IMR-90 (cell line): ENCODE measurements at regions of chr18 and their contacts with region 1.

Region 1: GRCh38 chr18:22563098-22563707 is 145.5 kb upstream of the CTAGE1 start:
- DNase-seq: peak; percentile 95
- ATAC-seq: peak; percentile 71
- H3K4me3 ChIP-seq: peak overlapping the region; percentile 5; the same call in 1 of the 2 replicates
- H3K27ac ChIP-seq: no peak overlapping the region
- H3K4me1 ChIP-seq: peaks cover 6% of the 10 kb centered on the region
- H3K27me3 ChIP-seq: no peaks in the 10 kb centered on the region; the same call in 1 of the 2 replicates
- CTCF ChIP-seq: peak; percentile 91
- POLR2A ChIP-seq: 0 out of 2 replicates have a peak, but pooled peaks have one; percentile 45
- RAD21 ChIP-seq: peak; percentile 100

Region 2: DNA sequence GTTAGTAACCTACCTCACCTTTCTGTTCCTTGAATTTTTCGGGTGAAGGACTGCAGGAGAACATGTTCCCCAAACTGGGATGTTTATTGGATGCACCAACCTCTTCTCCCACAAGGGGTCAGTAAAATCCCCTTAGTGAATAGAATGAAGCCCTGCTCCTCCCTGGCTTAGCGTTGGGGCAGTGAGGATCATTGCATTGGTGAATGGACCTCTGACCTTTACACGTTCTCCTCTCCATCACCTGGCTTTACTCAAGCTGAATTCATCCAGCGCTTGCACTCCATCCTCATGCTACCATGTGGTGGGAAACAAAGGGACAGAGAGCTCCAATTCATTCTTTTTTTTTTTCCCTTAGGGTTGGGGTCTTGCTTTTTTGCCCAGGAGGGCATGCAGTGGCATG is 665.4 kb before region 1 on chr18:
- CTCF ChIA-PET with region 1: interaction called, 3 read pairs
- POLR2A ChIA-PET with region 1: interaction called, 3 read pairs
- dilution Hi-C with region 1: no loop called
- in situ Hi-C with region 1: loop called (anchors 10 kb)
- intact Hi-C with region 1: loop called (anchors 5 kb)
- DNase-seq: peak; percentile 42
- ATAC-seq: peak; percentile 87
- H3K4me3 ChIP-seq: no peak overlapping the region
- H3K27ac ChIP-seq: no peak overlapping the region
- H3K4me1 ChIP-seq: no peaks in the 10 kb centered on the region; the same call in 1 of the 2 replicates
- H3K27me3 ChIP-seq: no peaks in the 10 kb centered on the region; the same call in 1 of the 2 replicates
- CTCF ChIP-seq: peak; percentile 66
- POLR2A ChIP-seq: no peak
- RAD21 ChIP-seq: peak; percentile 71

Region 3: DNA sequence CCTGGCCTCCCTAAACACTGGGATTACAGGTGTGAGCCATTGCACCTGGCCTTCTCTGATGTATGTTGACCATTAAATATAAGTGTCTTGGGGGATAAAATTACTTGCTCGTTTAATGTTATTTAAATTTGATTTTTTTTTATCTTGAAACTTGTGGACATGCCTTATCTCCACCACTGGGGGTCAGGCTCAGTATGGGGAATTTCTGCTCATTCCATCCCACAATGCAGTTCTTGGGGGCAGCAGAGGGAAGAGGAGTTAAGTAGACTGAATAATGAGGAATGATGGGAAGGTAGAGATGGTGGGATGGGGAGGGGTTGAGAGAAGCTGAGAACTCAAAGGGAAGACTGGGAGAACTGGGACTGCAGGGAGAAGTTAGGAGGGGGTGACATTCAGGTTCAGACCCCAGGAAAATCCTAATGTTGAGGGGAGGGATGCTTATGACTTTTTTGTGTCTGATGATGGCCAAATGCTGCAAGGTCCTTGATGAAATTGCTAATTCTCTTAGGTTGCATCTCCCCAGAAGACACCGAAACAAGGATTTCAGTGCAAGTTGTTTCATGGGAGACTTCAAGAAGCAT is 648.4 kb before region 1 on chr18:
- CTCF ChIA-PET with region 1: interaction called, 3 read pairs
- POLR2A ChIA-PET with region 1: no interaction called
- dilution Hi-C with region 1: no loop called
- in situ Hi-C with region 1: no loop called
- intact Hi-C with region 1: loop called (anchors 1 kb)
- DNase-seq: peak; percentile 62
- ATAC-seq: peak; percentile 92
- H3K4me3 ChIP-seq: no peak overlapping the region
- H3K27ac ChIP-seq: no peak overlapping the region
- H3K4me1 ChIP-seq: no peaks in the 10 kb centered on the region
- H3K27me3 ChIP-seq: peaks cover 16% of the 10 kb centered on the region
- CTCF ChIP-seq: peak; percentile 86
- POLR2A ChIP-seq: no peak
- RAD21 ChIP-seq: peak; percentile 85

Region 4: DNA sequence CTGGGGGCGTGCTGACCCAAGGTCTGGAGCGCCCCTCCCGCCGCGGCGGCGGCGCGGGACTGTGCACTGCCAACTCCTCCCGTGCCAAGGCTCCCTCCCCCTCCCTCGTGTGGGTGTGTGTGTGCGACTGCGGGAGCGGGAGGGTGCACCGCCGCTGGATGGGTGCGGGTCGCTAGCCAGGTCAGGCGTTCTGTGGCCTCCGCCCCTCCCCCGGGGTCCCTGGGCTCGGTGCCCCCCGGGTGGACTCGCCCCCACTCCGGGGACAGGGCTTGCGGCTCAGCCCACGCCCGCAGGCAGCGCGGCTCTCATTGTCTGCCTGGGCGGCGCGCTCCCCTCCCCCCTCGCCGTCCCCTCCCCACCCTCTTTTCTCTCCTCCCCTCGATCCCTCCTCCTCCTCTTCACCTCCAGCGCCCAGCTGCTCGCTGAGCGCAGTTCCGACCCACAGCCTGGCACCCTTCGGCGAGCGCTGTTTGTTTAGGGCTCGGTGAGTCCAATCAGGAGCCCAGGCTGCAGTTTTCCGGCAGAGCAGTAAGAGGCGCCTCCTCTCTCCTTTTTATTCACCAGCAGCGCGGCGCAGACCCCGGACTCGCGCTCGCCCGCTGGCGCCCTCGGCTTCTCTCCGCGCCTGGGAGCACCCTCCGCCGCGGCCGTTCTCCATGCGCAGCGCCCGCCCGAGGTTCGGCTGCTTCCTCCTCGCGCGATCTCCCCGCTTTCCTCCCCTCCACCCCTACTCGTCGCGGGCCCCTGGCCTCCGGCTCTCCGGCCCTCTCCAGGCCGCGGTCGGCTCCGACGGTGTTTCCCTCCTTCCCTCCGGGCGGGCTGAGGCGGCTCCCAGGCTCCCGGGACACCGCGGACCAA is 394.0 kb before region 1 on chr18 and contains the start of gene GATA6:
- CTCF ChIA-PET with region 1: interaction called, 3 read pairs
- POLR2A ChIA-PET with region 1: no interaction called
- dilution Hi-C with region 1: no loop called
- in situ Hi-C with region 1: loop called (anchors 5 kb)
- intact Hi-C with region 1: loop called (anchors 1 kb)
- DNase-seq: peak; percentile 91
- ATAC-seq: peak; percentile 78
- H3K4me3 ChIP-seq: peak within 1 kb of the TSS; percentile 77
- H3K27ac ChIP-seq: peak within 1 kb of the TSS; percentile 75
- H3K4me1 ChIP-seq: peaks cover 12% of the 10 kb centered on the region
- H3K27me3 ChIP-seq: peaks cover 45% of the 10 kb centered on the region
- CTCF ChIP-seq: peak; percentile 65
- POLR2A ChIP-seq: peak; percentile 98
- RAD21 ChIP-seq: peak; percentile 59
- total RNA-seq, gene GATA6: 2.5 and 3.3 TPM in 2 replicates

Region 5: DNA sequence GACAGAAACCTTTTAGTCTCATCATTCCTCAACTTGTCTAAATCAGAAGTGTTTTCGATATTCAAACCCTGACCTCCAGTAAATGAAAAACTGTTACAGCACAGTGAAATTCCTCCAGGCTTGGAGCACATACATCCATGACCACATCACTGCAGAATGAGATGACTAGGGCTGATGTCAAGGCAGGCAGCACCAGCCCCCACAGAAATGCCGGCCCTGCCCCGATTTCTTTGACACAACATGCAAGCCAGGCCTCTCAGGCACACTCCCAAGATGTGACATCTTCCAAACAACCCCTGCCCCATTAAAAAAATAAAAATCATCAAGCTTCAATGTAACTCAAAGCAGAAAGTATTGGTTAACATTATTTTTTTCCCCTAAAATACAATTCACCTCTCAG is 248.8 kb before region 1 on chr18:
- CTCF ChIA-PET with region 1: no interaction called
- POLR2A ChIA-PET with region 1: no interaction called
- dilution Hi-C with region 1: no loop called
- in situ Hi-C with region 1: no loop called
- intact Hi-C with region 1: loop called (anchors 1 kb)
- DNase-seq: peak; percentile 97
- ATAC-seq: peak; percentile 96
- H3K4me3 ChIP-seq: peak overlapping the region; percentile 12; the same call in 1 of the 2 replicates
- H3K27ac ChIP-seq: peak overlapping the region; percentile 85
- H3K4me1 ChIP-seq: peaks cover 12% of the 10 kb centered on the region
- H3K27me3 ChIP-seq: no peaks in the 10 kb centered on the region
- CTCF ChIP-seq: no peak
- POLR2A ChIP-seq: no peak; the same call in 1 of the 2 replicates
- RAD21 ChIP-seq: peak; percentile 32

Region 6: GRCh38 chr18:22378672-22379282 is 184.4 kb before region 1 on chr18:
- CTCF ChIA-PET with region 1: interaction called, 3 read pairs
- POLR2A ChIA-PET with region 1: no interaction called
- dilution Hi-C with region 1: no loop called
- in situ Hi-C with region 1: no loop called
- intact Hi-C with region 1: loop called (anchors 5 kb)
- DNase-seq: peak; percentile 30
- ATAC-seq: peak; percentile 66; the same call in 1 of the 2 replicates
- H3K4me3 ChIP-seq: no peak overlapping the region
- H3K27ac ChIP-seq: no peak overlapping the region
- H3K4me1 ChIP-seq: no peaks in the 10 kb centered on the region
- H3K27me3 ChIP-seq: peaks cover 4% of the 10 kb centered on the region
- CTCF ChIP-seq: peak; percentile 37
- POLR2A ChIP-seq: no peak
- RAD21 ChIP-seq: peak; percentile 42; the same call in 1 of the 2 replicates

Region 7: DNA sequence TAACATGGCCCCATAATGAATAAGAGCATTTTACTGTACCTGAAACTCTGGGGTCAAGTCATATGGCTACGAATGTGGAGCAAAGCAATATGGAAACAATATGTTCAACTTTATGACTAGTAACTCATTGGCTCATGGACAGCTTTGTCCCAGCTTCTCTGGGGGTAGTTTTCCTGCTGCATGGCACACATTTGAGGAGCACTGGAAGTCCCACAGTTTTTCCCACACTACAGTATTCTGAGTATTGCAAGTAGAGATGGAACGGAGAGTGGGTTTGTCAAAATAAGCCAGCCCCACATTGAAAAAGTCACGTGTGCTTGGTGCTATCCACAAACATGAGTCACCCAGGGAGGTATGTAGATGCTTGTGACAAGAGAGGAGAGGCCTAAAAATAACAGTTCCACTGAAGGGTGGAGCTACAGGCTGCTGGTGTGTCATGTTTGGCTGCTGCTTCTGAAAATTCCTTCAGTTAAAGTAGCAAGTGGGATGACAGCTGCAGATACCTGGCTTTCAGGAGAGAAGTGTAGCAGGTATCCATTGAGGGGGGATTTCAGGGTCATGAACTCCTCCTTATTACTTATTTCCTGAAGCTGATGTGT is 97.2 kb before region 1 on chr18:
- CTCF ChIA-PET with region 1: interaction called, 3 read pairs
- POLR2A ChIA-PET with region 1: no interaction called
- dilution Hi-C with region 1: no loop called
- in situ Hi-C with region 1: loop called (anchors 10 kb)
- intact Hi-C with region 1: loop called (anchors 1 kb)
- DNase-seq: peak; percentile 98
- ATAC-seq: peak; percentile 76
- H3K4me3 ChIP-seq: no peak overlapping the region
- H3K27ac ChIP-seq: 0 out of 2 replicates have a peak overlapping the region, but pooled peaks have one; percentile 3
- H3K4me1 ChIP-seq: peaks cover 28% of the 10 kb centered on the region
- H3K27me3 ChIP-seq: no peaks in the 10 kb centered on the region
- CTCF ChIP-seq: no peak
- POLR2A ChIP-seq: peak; percentile 15; the same call in 1 of the 2 replicates
- RAD21 ChIP-seq: peak; percentile 21